Naive thymus-derived CD4-positive, alpha-beta T cell (primary cell): ENCODE measurements at regions of chr21 and their contacts with region 1.

Region 1: DNA sequence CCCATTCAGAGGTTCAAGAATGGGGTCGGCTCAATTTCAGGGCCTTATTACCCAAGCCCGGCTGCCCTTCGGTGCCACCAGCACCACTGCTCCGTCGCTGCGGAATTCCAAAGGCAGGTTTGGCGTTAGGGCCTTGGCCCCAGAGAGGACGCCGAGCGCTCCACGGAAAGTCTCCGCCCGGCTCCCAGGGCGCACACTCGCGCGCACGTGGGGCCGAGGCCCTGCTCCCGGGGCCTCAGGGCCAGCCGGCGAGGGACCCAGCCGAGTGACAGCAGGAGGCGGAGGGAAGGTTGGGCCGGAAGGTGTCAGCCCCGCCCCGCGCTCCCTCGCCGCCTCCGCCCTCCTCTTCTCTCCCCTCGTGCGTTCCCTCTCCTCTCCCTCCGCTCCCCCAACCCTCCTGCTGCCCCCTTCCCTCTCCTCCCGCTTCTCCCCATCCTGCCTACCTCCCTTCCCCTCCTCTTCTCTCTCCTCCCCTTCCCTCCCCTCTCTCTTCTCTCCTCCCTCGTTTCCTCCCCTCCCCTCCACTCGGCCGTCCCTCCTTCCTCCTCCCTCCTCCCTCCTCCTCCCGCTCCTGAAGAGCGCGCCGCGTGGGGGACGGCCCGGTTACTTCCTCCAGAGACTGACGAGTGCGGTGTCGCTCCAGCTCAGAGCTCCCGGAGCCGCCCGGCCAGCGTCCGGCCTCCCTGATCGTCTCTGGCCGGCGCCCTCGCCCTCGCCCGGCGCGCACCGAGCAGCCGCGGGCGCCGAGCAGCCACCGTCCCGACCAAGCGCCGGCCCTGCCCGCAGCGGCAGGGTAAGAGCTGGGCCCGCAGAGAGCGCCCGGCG is at the start of gene ETS2:
- DNase-seq: peak; percentile 40 to 79 (median 62)
- ATAC-seq: peak; percentile 85
- H3K4me3 ChIP-seq: peak within 1 kb of the TSS; percentile 81
- H3K4me3 Mint-ChIP-seq: peak within 1 kb of the TSS; percentile 85 to 97 (median 92)
- H3K27ac ChIP-seq: peak within 1 kb of the TSS; percentile 70
- H3K27ac Mint-ChIP-seq: peak within 1 kb of the TSS; percentile 76 to 95 (median 86)
- H3K4me1 ChIP-seq: peaks cover 3 to 9% of the 10 kb centered on the region in 2 donors
- H3K4me1 Mint-ChIP-seq: peaks cover 12 to 39% (median 30%) of the 10 kb centered on the region in 7 donors
- H3K27me3 ChIP-seq: no peaks in the 10 kb centered on the region
- H3K27me3 Mint-ChIP-seq: peaks cover 0 to 4% (median 0%) of the 10 kb centered on the region in 5 donors
- total RNA-seq, gene ETS2: 15.6 to 61.1 (median 20.9) TPM

Region 2: GRCh38 chr21:38505654-38506515 is 299.7 kb before region 1 on chr21:
- CTCF ChIA-PET with region 1: no interaction called
- POLR2A ChIA-PET with region 1: no interaction called
- intact Hi-C with region 1: loop called in 1 of 2 experiments (anchors 10 kb)
- DNase-seq: peak in 5 of 9 donors; percentile 11 to 34 (median 13)
- ATAC-seq: peak; percentile 65
- H3K4me3 ChIP-seq: no peak overlapping the region
- H3K4me3 Mint-ChIP-seq: no peak overlapping the region
- H3K27ac ChIP-seq: no peak overlapping the region
- H3K27ac Mint-ChIP-seq: no peak overlapping the region
- H3K4me1 ChIP-seq: no peaks in the 10 kb centered on the region
- H3K4me1 Mint-ChIP-seq: peaks cover 9 to 21% (median 11%) of the 10 kb centered on the region in 7 donors
- H3K27me3 ChIP-seq: no peaks in the 10 kb centered on the region
- H3K27me3 Mint-ChIP-seq: peaks cover 21 to 52% (median 50%) of the 10 kb centered on the region in 5 donors

Region 3: DNA sequence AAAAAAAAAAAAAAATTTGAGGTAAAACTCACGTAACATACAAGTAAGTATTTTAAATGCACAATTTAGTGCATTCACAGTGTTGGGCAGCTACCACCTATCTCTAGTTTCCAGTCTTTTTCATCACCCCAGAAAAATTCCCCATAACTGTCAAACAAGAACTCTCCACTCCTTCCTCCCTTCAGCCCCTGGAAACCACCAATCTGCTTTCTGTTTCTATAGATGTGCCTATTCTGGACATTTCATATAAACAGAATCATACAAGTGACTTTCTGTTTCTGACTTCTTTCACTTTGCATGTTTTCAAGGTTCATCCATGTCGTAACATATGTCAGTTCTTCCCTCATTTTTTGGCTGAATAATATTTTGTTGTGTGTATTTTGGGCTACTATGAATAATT is 24.7 kb before region 1 on chr21:
- CTCF ChIA-PET with region 1: interaction called, 5 read pairs
- POLR2A ChIA-PET with region 1: interaction called, 4 read pairs
- intact Hi-C with region 1: loop called in 1 of 2 experiments (anchors 2 kb)
- DNase-seq: no peak
- ATAC-seq: peak; percentile 22
- H3K4me3 ChIP-seq: no peak overlapping the region
- H3K4me3 Mint-ChIP-seq: peak overlapping the region in 1 of 10 donors; percentile 16
- H3K27ac ChIP-seq: no peak overlapping the region
- H3K27ac Mint-ChIP-seq: peak overlapping the region in 1 of 9 donors; percentile 86
- H3K4me1 ChIP-seq: peaks cover 0 to 4% of the 10 kb centered on the region in 2 donors
- H3K4me1 Mint-ChIP-seq: peaks cover 0 to 28% (median 7%) of the 10 kb centered on the region in 7 donors
- H3K27me3 ChIP-seq: no peaks in the 10 kb centered on the region
- H3K27me3 Mint-ChIP-seq: peaks cover 0 to 11% (median 4%) of the 10 kb centered on the region in 5 donors

Region 4: GRCh38 chr21:39004634-39005501 is 199.3 kb after region 1 on chr21:
- CTCF ChIA-PET with region 1: no interaction called
- POLR2A ChIA-PET with region 1: no interaction called
- intact Hi-C with region 1: loop called in 1 of 2 experiments (anchors 1 kb)
- DNase-seq: peak in 4 of 9 donors; percentile 5 to 23 (median 18)
- ATAC-seq: peak; percentile 53
- H3K4me3 ChIP-seq: no peak overlapping the region
- H3K4me3 Mint-ChIP-seq: peak overlapping the region in 8 of 10 donors; percentile 52 to 81 (median 64)
- H3K27ac ChIP-seq: no peak overlapping the region
- H3K27ac Mint-ChIP-seq: peak overlapping the region in 5 of 9 donors; percentile 48 to 96 (median 85)
- H3K4me1 ChIP-seq: no peaks in the 10 kb centered on the region
- H3K4me1 Mint-ChIP-seq: peaks cover 7 to 49% (median 22%) of the 10 kb centered on the region in 7 donors
- H3K27me3 ChIP-seq: no peaks in the 10 kb centered on the region
- H3K27me3 Mint-ChIP-seq: peaks cover 0 to 5% (median 4%) of the 10 kb centered on the region in 5 donors

Region 5: GRCh38 chr21:39022863-39023693 is 217.5 kb after region 1 on chr21:
- CTCF ChIA-PET with region 1: no interaction called
- POLR2A ChIA-PET with region 1: no interaction called
- intact Hi-C with region 1: no loop called
- DNase-seq: no peak
- ATAC-seq: no peak
- H3K4me3 ChIP-seq: no peak overlapping the region
- H3K4me3 Mint-ChIP-seq: no peak overlapping the region
- H3K27ac ChIP-seq: no peak overlapping the region
- H3K27ac Mint-ChIP-seq: no peak overlapping the region
- H3K4me1 ChIP-seq: no peaks in the 10 kb centered on the region
- H3K4me1 Mint-ChIP-seq: peaks cover 0 to 4% (median 0%) of the 10 kb centered on the region in 7 donors
- H3K27me3 ChIP-seq: no peaks in the 10 kb centered on the region
- H3K27me3 Mint-ChIP-seq: peaks cover 0 to 19% (median 6%) of the 10 kb centered on the region in 5 donors

Region 6: GRCh38 chr21:39183237-39184007 is 377.9 kb after region 1 on chr21 and contains the start of gene PSMG1:
- CTCF ChIA-PET with region 1: no interaction called
- POLR2A ChIA-PET with region 1: no interaction called
- intact Hi-C with region 1: loop called (anchors 1 kb)
- DNase-seq: peak; percentile 89 to 96 (median 94)
- ATAC-seq: peak; percentile 99
- H3K4me3 ChIP-seq: peak within 1 kb of the TSS; percentile 86
- H3K4me3 Mint-ChIP-seq: peak within 1 kb of the TSS; percentile 92 to 100 (median 97)
- H3K27ac ChIP-seq: peak within 1 kb of the TSS; percentile 93
- H3K27ac Mint-ChIP-seq: peak within 1 kb of the TSS; percentile 88 to 98 (median 95)
- H3K4me1 ChIP-seq: peaks cover 9% of the 10 kb centered on the region in 2 donors
- H3K4me1 Mint-ChIP-seq: peaks cover 28 to 78% (median 52%) of the 10 kb centered on the region in 7 donors
- H3K27me3 ChIP-seq: no peaks in the 10 kb centered on the region
- H3K27me3 Mint-ChIP-seq: no peaks in the 10 kb centered on the region
- total RNA-seq, gene PSMG1: 9.8 to 62.5 (median 16.9) TPM

Region 7: DNA sequence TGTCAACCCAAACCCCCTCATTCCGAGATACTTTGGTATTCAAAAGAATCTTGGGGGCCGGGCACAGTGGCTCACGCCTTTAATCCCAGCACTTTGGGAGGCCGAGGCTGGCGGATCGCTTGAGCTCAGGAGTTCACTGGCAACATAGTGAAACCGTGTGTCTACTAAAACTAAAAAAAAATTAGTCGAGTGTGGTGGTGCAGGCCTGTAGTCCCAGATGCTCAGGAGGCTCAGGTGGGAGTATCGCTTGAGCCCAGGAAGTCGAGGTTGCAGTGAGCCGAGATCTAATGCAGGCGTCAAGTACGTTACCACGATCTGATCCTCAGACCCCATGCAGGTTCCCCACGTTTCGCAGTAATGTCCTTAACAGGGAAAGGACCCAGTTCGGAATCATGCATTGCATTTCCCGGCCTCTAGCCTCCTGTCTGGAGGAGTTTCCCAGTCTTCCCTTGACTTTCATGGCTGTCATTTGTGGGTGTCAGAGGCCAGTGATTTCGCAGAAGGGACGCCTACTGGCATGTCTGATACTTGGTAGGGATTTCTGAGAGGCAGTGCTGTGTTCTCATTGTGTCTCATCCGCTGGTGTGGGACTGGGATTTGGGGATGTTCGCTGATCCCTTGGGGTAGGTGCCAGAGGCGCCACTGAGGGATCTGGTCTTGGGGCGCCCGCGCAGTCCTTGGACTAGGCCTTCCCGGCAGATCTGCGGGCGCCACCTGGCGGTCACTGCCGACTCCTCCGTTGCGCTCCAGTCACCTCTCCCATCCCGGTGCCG is 582.7 kb after region 1 on chr21:
- CTCF ChIA-PET with region 1: no interaction called
- POLR2A ChIA-PET with region 1: no interaction called
- intact Hi-C with region 1: loop called in 1 of 2 experiments (anchors 2 kb)
- DNase-seq: peak; percentile 71 to 93 (median 83)
- ATAC-seq: peak; percentile 87
- H3K4me3 ChIP-seq: peak overlapping the region; percentile 51
- H3K4me3 Mint-ChIP-seq: peak overlapping the region; percentile 83 to 91 (median 90)
- H3K27ac ChIP-seq: peak overlapping the region; percentile 67
- H3K27ac Mint-ChIP-seq: peak overlapping the region; percentile 71 to 94 (median 90)
- H3K4me1 ChIP-seq: peaks cover 11 to 15% of the 10 kb centered on the region in 2 donors
- H3K4me1 Mint-ChIP-seq: peaks cover 18 to 38% (median 31%) of the 10 kb centered on the region in 7 donors
- H3K27me3 ChIP-seq: no peaks in the 10 kb centered on the region
- H3K27me3 Mint-ChIP-seq: no peaks in the 10 kb centered on the region